Upper lobe of right lung (tissue), 1 donor: ENCODE measurements at regions of chr19 and their contacts with region 1.

Region 1: GRCh38 chr19:2273356-2274184 is 8.4 kb downstream of the PEAK3 start:
- DNase-seq: peak; percentile 89
- ATAC-seq: peak; percentile 43
- H3K4me3 ChIP-seq: peak overlapping the region; percentile 36
- H3K27ac ChIP-seq: peak overlapping the region; percentile 72
- H3K4me1 ChIP-seq: peaks cover 44% of the 10 kb centered on the region
- H3K27me3 ChIP-seq: no peaks in the 10 kb centered on the region
- CTCF ChIP-seq: peak; percentile 96

Region 2: GRCh38 chr19:2207991-2208860 is 65.3 kb before region 1 on chr19:
- intact Hi-C with region 1: no loop called
- DNase-seq: no peak
- ATAC-seq: peak; percentile 3
- H3K4me3 ChIP-seq: no peak overlapping the region
- H3K27ac ChIP-seq: no peak overlapping the region
- H3K4me1 ChIP-seq: peaks cover 4% of the 10 kb centered on the region
- H3K27me3 ChIP-seq: no peaks in the 10 kb centered on the region
- CTCF ChIP-seq: peak; percentile 21

Region 3: GRCh38 chr19:2236314-2237050 is 37.1 kb before region 1 on chr19 and contains the starts of genes PLEKHJ1 and SF3A2:
- intact Hi-C with region 1: loop called (anchors 5 kb)
- DNase-seq: peak; percentile 99
- ATAC-seq: peak; percentile 91
- H3K4me3 ChIP-seq: peak within 1 kb of the TSS; percentile 90
- H3K27ac ChIP-seq: peak within 1 kb of the TSS; percentile 99
- H3K4me1 ChIP-seq: peaks cover 49% of the 10 kb centered on the region
- H3K27me3 ChIP-seq: no peaks in the 10 kb centered on the region
- CTCF ChIP-seq: peak; percentile 93
- total RNA-seq, gene PLEKHJ1: 54.6 TPM
- total RNA-seq, gene SF3A2: 67.1 TPM

Region 4: DNA sequence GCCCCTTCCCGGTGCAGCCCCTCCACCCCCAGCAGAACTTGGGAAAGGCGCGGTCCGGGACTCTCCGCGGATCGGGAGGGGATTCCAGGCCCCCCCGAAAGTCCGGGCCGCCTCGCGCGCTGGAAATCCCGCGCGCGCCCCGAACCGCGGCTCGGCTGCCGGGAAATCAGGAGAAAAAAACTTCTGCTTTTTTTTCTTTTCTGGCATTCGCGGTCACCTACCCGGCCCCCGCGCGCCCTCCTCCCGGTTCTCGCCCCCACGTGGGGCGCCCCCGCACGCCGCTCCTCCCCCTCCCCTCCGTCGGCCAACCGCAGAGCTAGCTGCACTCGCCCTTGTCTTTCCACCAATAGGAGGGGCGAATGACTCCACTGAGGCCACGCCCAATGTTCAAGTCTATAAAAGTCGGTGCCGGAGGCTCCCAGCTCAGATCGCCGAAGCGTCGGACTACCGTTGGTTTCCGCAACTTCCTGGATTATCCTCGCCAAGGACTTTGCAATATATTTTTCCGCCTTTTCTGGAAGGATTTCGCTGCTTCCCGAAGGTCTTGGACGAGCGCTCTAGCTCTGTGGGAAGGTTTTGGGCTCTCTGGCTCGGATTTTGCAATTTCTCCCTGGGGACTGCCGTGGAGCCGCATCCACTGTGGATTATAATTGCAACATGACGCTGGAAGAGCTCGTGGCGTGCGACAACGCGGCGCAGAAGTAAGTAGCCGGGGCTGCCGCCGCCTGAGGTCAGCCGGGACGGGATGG is 202.3 kb after region 1 on chr19 and contains the start of gene GADD45B:
- intact Hi-C with region 1: no loop called
- DNase-seq: peak; percentile 99
- ATAC-seq: peak; percentile 86
- H3K4me3 ChIP-seq: peak within 1 kb of the TSS; percentile 93
- H3K27ac ChIP-seq: peak within 1 kb of the TSS; percentile 91
- H3K4me1 ChIP-seq: peaks cover 24% of the 10 kb centered on the region
- H3K27me3 ChIP-seq: no peaks in the 10 kb centered on the region
- CTCF ChIP-seq: no peak
- total RNA-seq, gene GADD45B: 91.2 TPM

Region 5: DNA sequence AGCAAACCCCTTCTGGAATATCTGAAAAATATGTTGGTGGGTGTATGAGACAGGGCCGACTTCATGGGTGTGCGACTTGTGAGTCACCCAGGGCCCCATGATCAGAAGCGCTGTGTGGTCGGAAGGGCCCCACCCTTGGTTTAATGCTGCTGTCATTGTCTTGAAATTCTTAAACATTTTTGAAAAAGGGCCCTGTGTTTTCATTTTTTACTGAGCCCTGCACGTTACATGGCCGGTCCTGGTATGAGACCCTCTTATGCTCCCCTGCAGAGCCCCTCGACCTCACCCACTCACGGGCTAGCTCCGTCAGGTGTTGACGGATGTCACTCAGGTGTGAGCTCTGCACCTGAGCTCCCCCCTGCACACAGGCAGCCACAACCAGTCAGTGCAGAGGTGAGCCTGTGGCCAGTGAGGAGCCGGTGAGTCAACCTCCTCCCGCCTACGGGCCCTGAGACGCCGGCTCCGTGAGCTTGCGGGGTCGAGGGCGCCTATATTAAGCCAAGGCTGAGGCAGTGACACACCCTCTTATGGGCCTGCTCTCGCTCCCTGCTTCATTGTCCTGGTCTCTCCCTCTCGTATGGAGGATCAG is 230.0 kb after region 1 on chr19:
- intact Hi-C with region 1: no loop called
- DNase-seq: no peak
- ATAC-seq: peak; percentile 75
- H3K4me3 ChIP-seq: no peak overlapping the region
- H3K27ac ChIP-seq: no peak overlapping the region
- H3K4me1 ChIP-seq: peaks cover 7% of the 10 kb centered on the region
- H3K27me3 ChIP-seq: no peaks in the 10 kb centered on the region
- CTCF ChIP-seq: no peak